ENCODE measurements at regions of chr17 and their contacts with region 1.

Region 1: DNA sequence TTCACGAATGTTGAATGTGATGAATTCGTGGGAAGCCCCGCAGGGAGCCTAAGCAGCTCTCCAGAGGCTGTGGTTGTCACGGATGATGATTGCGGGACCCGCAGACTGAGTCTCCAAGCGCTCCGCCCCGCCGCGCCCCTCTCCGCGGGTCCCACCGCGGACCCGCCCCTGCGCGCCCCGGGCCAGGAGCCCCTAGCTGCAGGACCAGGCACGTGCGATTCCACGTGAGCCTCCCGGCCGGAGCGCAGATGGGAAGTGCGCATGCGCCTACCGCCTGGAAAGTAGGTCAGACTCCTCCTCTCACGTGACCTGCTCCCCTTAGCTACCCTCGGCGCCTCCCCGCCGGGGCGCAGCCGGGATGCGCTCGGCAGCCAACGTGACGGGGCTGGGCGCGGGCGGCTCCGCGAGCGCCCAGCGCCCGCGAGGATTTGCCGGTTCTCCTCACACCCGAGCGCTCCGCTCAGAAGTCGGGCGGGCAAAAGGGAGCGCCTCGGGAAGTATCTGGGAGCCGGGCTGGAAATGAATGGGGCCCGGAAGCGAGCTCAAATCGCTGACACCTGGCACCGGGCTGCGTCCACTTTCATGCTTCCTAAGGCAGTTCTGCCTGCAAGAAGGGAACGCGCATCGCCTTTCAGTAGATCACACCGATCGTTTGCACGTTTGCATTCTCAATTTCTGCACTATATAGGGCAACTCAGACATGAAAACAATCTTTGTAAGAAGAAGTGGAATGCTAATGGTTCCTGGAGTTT is 26.4 kb upstream of the HLF start:
- DNase-seq: peak; percentile 95

Region 2: GRCh38 chr17:55093353-55093752 is 145.0 kb before region 1 on chr17:
- intact Hi-C with region 1: no loop called
- DNase-seq: no peak

Region 3: GRCh38 chr17:55264645-55265298 is 26.4 kb after region 1 on chr17 and contains the start of gene HLF:
- intact Hi-C with region 1: loop called (anchors 1 kb)
- DNase-seq: peak; percentile 88
- total RNA-seq, gene HLF: 9.8 TPM

Region 4: DNA sequence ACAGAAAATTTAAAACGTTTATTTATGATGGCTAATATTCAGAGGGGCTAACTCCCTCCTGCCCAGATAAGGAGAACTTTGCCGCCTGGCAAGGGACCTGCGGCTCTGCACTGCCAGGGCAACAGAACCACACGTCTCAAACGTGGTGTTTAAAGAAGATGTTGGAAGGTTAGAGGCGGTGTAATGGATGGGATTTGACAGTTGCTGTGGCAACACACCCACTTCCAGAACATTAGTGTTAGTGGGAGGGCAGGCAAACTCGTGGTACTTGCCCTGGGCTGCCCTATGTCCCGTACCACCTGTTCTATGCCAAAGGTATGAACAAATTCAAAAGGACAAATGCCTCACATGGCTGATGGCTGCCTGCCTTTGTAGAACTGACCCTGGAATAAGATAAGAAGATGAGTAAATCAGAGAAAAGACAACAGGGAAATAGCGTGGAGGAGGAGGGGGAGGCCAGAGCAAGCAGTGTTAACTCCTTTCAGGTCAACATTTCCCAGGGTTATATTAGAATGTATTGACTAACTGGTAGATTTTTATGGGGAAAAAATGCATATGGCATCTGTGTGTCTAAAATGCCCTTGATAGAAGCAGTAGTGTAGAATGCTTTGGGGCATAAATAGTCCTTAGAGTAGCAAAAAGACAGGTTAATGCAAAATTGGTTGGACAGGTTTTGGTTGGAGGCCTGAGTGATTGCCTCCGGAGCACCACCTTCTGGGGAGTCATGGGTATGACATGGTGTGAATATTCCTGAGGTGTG is 57.2 kb after region 1 on chr17:
- intact Hi-C with region 1: loop called (anchors 2 kb)
- DNase-seq: no peak

Region 5: GRCh38 chr17:55394357-55395021 is 156.1 kb after region 1 on chr17:
- intact Hi-C with region 1: no loop called
- DNase-seq: no peak